Activated naive CD4-positive, alpha-beta T cell treated with anti-CD3 and anti-CD28 coated beads for 36 hours (primary cell): ENCODE measurements at regions of chr4 and their contacts with region 1.

Region 1: DNA sequence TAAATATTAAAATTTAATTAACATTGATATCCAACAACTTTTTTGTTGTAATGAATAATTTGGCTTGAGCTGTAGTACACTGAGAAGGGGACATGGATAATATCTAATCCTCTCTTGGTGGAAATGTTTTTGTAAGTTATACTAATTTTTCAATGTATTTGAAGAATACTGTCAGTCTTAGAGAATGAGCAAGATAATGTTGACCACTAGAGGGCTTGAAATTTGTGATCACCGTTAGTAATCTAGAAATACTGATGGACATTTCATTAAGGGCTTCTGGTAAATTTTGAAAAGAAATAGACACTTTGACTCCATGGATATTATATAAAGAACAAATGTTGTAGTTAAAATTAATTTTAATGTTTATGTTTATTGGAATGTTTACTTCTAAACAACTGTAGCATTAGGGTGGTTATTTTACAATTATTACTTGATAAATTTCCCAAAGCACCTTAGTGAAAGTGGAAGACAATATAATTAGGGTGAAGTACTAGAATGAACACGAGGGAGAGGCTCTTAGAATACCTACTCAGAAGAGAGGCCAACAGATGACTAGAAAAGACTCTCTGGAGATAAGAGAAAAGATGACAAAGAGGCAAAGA is 20.0 kb upstream of the CAMK2D start:
- DNase-seq: no peak
- H3K4me3 Mint-ChIP-seq: no peak overlapping the region
- H3K27ac Mint-ChIP-seq: no peak overlapping the region
- H3K4me1 Mint-ChIP-seq: peaks cover 28% of the 10 kb centered on the region
- H3K27me3 Mint-ChIP-seq: no peaks in the 10 kb centered on the region

Region 2: DNA sequence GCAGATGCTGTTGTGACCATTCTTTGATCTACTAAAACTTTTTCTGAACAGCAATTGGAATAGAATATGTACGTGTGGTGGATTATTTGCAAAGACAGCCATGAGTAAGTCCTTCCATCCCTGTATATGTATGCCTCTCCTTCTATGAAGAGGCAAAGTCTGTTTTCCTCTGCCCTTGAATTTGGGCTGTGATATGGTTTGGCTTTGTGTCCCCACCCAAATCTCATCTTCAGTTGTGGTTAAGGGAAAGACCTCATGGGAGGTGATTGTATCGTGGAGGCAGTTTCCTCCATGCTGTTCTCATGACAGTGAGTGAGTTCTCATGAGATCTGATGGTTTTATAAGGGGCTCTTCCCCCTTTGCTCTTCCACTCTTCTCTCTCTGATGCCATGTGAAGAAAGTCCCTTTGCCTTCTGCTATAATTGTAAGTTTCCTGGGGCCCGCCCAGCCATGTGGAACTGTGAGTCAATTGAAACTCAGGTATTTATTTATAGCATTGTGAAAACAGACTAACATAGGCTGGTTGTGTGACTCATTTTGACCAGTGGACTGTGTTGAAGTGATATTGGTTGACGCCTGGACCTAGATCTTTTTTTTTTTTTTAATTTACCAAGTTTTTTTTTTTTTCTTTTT is 88.3 kb after region 1 on chr4:
- CTCF ChIA-PET with region 1: no interaction called
- intact Hi-C with region 1: loop called (anchors 5 kb)
- DNase-seq: peak; percentile 80
- H3K4me3 Mint-ChIP-seq: no peak overlapping the region
- H3K27ac Mint-ChIP-seq: peak overlapping the region; percentile 82
- H3K4me1 Mint-ChIP-seq: peaks cover 19% of the 10 kb centered on the region
- H3K27me3 Mint-ChIP-seq: no peaks in the 10 kb centered on the region

Region 3: DNA sequence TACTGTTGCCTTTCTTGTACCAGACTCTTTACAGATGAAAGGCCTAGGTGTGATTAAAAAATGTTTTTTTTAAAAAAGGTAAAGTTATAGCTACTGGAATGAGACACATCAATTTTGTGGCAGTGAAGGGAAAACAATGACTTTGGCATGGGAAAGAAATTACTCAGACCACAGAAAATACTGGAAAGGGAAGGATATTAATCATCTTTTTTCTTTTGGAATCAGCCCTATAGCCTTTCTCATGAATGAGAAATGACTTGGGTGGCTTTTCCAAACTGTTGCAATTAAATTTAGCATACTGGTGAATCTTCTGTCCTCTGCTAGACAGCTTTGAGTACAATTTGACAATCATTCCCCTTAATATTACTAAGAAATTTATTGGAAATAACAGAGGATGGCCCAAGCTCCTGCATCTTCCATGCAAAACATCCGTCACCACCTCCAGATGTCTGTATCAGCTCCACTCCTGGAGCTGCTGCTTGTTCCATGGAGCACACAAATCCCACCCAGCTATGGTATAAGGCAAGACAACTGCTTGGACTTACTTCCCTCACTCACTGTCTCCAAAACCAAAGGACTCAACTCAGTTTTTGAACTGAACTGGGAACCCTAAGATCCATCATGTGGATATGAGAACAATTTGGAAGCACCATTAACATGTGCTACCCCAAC is 295.5 kb after region 1 on chr4:
- CTCF ChIA-PET with region 1: no interaction called
- intact Hi-C with region 1: loop called (anchors 5 kb)
- DNase-seq: no peak
- H3K4me3 Mint-ChIP-seq: no peak overlapping the region
- H3K27ac Mint-ChIP-seq: no peak overlapping the region
- H3K4me1 Mint-ChIP-seq: no peaks in the 10 kb centered on the region
- H3K27me3 Mint-ChIP-seq: no peaks in the 10 kb centered on the region